ENCODE measurements at regions of chr5 and their contacts with region 1.

Region 1: DNA sequence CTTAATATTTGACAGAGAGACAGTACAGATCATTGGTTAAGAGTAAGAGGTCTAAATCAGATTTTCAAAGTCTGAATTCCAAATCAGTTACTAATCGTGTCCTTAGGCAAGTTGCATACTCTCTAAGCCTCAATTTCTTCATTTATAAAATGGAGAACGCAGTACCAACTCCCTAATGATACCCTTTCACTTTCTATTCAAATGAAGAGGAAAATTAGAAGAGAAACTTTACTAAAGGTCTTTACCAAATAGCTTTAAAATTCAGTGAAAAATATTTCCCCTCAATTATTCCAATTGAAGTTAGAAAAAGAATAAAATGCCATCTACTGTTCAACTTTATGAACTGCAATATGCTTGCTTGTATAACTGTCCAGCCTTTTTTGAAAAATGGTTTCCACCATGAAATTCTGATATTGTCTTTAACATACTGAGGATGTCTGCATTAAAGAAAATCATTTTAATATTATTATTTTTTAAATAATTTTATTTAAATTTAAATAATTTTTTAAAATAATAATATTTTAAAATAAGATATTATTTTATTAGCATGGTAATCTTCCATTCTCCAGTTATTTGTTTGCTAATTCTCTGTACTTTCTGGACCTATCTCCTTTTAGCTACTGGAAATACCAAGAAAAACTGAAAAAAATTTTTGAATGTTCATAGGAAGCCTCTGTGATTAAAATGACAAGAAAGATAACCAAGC is 36.0 kb downstream of the POC5 start:
- DNase-seq: no peak
- ATAC-seq: peak; percentile 62
- H3K4me3 Mint-ChIP-seq: no peak overlapping the region
- H3K27ac Mint-ChIP-seq: no peak overlapping the region
- H3K4me1 Mint-ChIP-seq: peaks cover 8% of the 10 kb centered on the region
- H3K27me3 Mint-ChIP-seq: no peaks in the 10 kb centered on the region
- CTCF ChIP-seq: peak; percentile 89

Region 2: GRCh38 chr5:75363726-75364495 is 317.4 kb before region 1 on chr5:
- CTCF ChIA-PET with region 1: interaction called, 3 read pairs
- POLR2A ChIA-PET with region 1: no interaction called
- intact Hi-C with region 1: loop called (anchors 10 kb)
- DNase-seq: no peak
- ATAC-seq: no peak
- H3K4me3 Mint-ChIP-seq: no peak overlapping the region
- H3K27ac Mint-ChIP-seq: no peak overlapping the region
- H3K4me1 Mint-ChIP-seq: peaks cover 7% of the 10 kb centered on the region
- H3K27me3 Mint-ChIP-seq: no peaks in the 10 kb centered on the region
- CTCF ChIP-seq: no peak

Region 3: DNA sequence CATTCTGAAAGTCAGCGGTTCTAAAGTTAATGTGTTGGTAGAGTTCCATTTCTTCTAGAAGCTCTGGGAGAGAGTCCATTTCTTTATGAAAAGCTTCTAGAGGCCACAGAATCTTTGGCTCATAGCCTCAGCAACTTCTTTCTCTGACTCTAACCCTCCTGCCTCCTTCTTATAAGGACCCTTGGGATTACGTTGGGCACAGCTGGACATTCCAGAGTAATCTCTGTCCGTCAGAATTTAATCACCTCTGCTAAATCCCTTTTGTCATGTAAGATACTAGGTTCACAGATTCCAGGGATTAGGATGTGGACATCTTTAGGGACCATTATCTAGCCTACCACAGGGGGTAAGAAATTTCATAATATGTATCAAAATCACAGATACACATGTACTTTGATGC is 92.6 kb before region 1 on chr5:
- CTCF ChIA-PET with region 1: no interaction called
- POLR2A ChIA-PET with region 1: no interaction called
- intact Hi-C with region 1: no loop called
- DNase-seq: no peak
- ATAC-seq: no peak
- H3K4me3 Mint-ChIP-seq: no peak overlapping the region
- H3K27ac Mint-ChIP-seq: no peak overlapping the region
- H3K4me1 Mint-ChIP-seq: no peaks in the 10 kb centered on the region
- H3K27me3 Mint-ChIP-seq: no peaks in the 10 kb centered on the region
- CTCF ChIP-seq: no peak

Region 4: GRCh38 chr5:75701856-75702255 is 20.6 kb after region 1 on chr5:
- CTCF ChIA-PET with region 1: no interaction called
- POLR2A ChIA-PET with region 1: no interaction called
- intact Hi-C with region 1: no loop called
- DNase-seq: no peak
- ATAC-seq: no peak
- H3K4me3 Mint-ChIP-seq: no peak overlapping the region
- H3K27ac Mint-ChIP-seq: no peak overlapping the region
- H3K4me1 Mint-ChIP-seq: peaks cover 9% of the 10 kb centered on the region
- H3K27me3 Mint-ChIP-seq: no peaks in the 10 kb centered on the region
- CTCF ChIP-seq: no peak

Region 5: DNA sequence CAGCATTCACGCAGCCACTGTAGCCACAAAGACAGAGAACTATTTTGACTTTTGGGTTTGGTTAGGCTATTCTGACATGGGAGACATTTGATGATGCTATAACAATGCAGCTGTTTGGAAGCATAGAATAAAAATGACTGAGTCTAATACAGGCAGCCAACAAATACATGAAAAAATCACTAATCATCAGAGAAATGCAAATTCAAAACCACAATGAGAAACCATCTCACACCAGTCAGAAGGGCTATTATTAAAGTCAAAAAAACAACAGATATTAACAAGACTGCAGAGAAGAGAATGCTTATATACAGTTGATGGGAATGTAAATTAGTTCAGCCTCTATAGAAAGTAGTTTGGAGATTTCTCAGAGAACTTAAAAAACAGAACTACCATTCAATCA is 143.0 kb after region 1 on chr5:
- CTCF ChIA-PET with region 1: no interaction called
- POLR2A ChIA-PET with region 1: no interaction called
- intact Hi-C with region 1: no loop called
- DNase-seq: no peak
- ATAC-seq: no peak
- H3K4me3 Mint-ChIP-seq: no peak overlapping the region
- H3K27ac Mint-ChIP-seq: no peak overlapping the region
- H3K4me1 Mint-ChIP-seq: no peaks in the 10 kb centered on the region
- H3K27me3 Mint-ChIP-seq: peaks cover 2% of the 10 kb centered on the region
- CTCF ChIP-seq: no peak

Measured in activated CD8-positive, alpha-beta T cell treated with anti-CD3 and anti-CD28 coated beads for 36 hours (primary cell).